WTC11 (cell line): ENCODE measurements at regions of chr19 and their contacts with region 1.

Region 1: GRCh38 chr19:44752816-44753618 is 4.5 kb downstream of the BCL3 start:
- DNase-seq: peak; percentile 72
- ATAC-seq: peak; percentile 27
- H3K4me3 Mint-ChIP-seq: peak overlapping the region; percentile 71
- H3K27ac Mint-ChIP-seq: no peak overlapping the region
- H3K4me1 Mint-ChIP-seq: peaks cover 30% of the 10 kb centered on the region
- H3K27me3 Mint-ChIP-seq: peaks cover 87% of the 10 kb centered on the region
- CTCF ChIP-seq: no peak

Region 2: GRCh38 chr19:44689056-44689895 is 63.7 kb before region 1 on chr19:
- CTCF ChIA-PET with region 1: interaction called, 18 read pairs
- POLR2A ChIA-PET with region 1: no interaction called
- DNase-seq: peak; percentile 94
- ATAC-seq: peak; percentile 84
- H3K4me3 Mint-ChIP-seq: peak overlapping the region; percentile 11; the same call in 1 of the 2 replicates
- H3K27ac Mint-ChIP-seq: no peak overlapping the region
- H3K4me1 Mint-ChIP-seq: peaks cover 22% of the 10 kb centered on the region
- H3K27me3 Mint-ChIP-seq: no peaks in the 10 kb centered on the region
- CTCF ChIP-seq: peak; percentile 97

Region 3: GRCh38 chr19:44796701-44797115 is 43.7 kb after region 1 on chr19:
- CTCF ChIA-PET with region 1: no interaction called
- POLR2A ChIA-PET with region 1: no interaction called
- DNase-seq: no peak
- ATAC-seq: peak; percentile 52
- H3K4me3 Mint-ChIP-seq: peak overlapping the region; percentile 6; the same call in 1 of the 2 replicates
- H3K27ac Mint-ChIP-seq: peak overlapping the region; percentile 96
- H3K4me1 Mint-ChIP-seq: peaks cover 31% of the 10 kb centered on the region
- H3K27me3 Mint-ChIP-seq: peaks cover 14% of the 10 kb centered on the region
- CTCF ChIP-seq: no peak